ENCODE measurements at regions of chr11 and their contacts with region 1.

Region 1: GRCh38 chr11:46529095-46529905 is 64.5 kb downstream of the AMBRA1 start:
- DNase-seq: peak; percentile 76
- H3K4me3 Mint-ChIP-seq: no peak overlapping the region
- H3K27ac Mint-ChIP-seq: peak overlapping the region; percentile 12
- H3K4me1 Mint-ChIP-seq: peaks cover 23% of the 10 kb centered on the region
- H3K27me3 Mint-ChIP-seq: no peaks in the 10 kb centered on the region

Region 2: DNA sequence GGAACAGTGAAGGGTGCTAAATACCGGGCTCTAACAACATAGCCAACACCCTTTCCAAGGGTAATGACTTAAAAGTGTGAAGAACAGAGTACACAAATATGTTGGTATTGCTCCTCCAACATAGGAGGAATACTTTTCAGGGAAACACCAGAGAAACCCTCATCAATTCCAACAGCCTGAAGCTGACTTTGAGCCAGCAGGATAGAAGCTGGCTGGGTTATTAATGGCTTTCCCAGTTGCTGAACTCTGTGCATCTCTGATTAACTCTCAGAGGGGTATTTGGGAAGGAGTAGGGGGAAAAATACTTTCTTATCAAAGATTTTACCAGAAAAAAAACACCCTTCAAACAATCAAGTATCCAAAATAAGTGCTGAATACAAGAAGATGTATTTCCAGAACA is 31.1 kb before region 1 on chr11:
- CTCF ChIA-PET with region 1: interaction called, 11 read pairs
- POLR2A ChIA-PET with region 1: no interaction called
- DNase-seq: no peak
- H3K4me3 Mint-ChIP-seq: no peak overlapping the region
- H3K27ac Mint-ChIP-seq: no peak overlapping the region
- H3K4me1 Mint-ChIP-seq: peaks cover 3% of the 10 kb centered on the region
- H3K27me3 Mint-ChIP-seq: no peaks in the 10 kb centered on the region

Region 3: GRCh38 chr11:46513934-46514342 is 15.4 kb before region 1 on chr11:
- CTCF ChIA-PET with region 1: interaction called, 13 read pairs
- POLR2A ChIA-PET with region 1: no interaction called
- DNase-seq: no peak
- H3K4me3 Mint-ChIP-seq: no peak overlapping the region
- H3K27ac Mint-ChIP-seq: no peak overlapping the region
- H3K4me1 Mint-ChIP-seq: peaks cover 13% of the 10 kb centered on the region
- H3K27me3 Mint-ChIP-seq: no peaks in the 10 kb centered on the region

Region 4: DNA sequence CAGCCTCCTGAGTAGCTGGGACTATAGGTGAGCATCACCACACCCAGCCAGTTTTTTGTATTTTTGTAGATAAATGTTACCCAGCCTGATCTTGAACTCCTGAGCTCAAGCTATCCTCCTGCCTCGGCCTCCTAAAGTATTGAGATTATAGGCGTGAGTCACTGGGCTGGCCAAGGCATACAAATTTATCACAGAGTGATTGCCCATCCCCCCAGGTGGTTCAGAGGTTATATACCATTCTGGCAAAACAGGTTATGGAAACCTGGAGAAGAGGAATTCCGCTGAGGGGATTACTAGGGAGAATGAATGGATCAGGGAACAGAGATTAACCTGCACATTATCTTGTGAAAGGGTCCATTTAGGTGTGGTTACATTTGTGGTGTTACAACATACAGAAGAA is 96.1 kb after region 1 on chr11:
- CTCF ChIA-PET with region 1: no interaction called
- POLR2A ChIA-PET with region 1: no interaction called
- DNase-seq: no peak
- H3K4me3 Mint-ChIP-seq: no peak overlapping the region
- H3K27ac Mint-ChIP-seq: no peak overlapping the region
- H3K4me1 Mint-ChIP-seq: peaks cover 19% of the 10 kb centered on the region
- H3K27me3 Mint-ChIP-seq: no peaks in the 10 kb centered on the region